ENCODE measurements at regions of chr3 and their contacts with region 1.

Region 1: GRCh38 chr3:55485211-55485791 is 1.8 kb downstream of the WNT5A start:
- DNase-seq: peak; percentile 55 to 70
- H3K4me3 ChIP-seq: peak overlapping the region; percentile 17
- H3K4me3 Mint-ChIP-seq: peak overlapping the region; percentile 90
- H3K27ac Mint-ChIP-seq: no peak overlapping the region
- H3K4me1 ChIP-seq: peaks cover 7% of the 10 kb centered on the region; the same call in 1 of the 2 replicates
- H3K4me1 Mint-ChIP-seq: no peaks in the 10 kb centered on the region
- H3K27me3 ChIP-seq: no peaks in the 10 kb centered on the region
- H3K27me3 Mint-ChIP-seq: peaks cover 10% of the 10 kb centered on the region
- CTCF ChIP-seq: peak; percentile 71 to 72

Region 2: GRCh38 chr3:55567615-55568014 is 82.3 kb after region 1 on chr3:
- CTCF ChIA-PET with region 1: no interaction called
- POLR2A ChIA-PET with region 1: no interaction called
- intact Hi-C with region 1: loop called (anchors 5 kb)
- DNase-seq: no peak
- H3K4me3 ChIP-seq: no peak overlapping the region
- H3K4me3 Mint-ChIP-seq: no peak overlapping the region
- H3K27ac Mint-ChIP-seq: peak overlapping the region; percentile 3
- H3K4me1 ChIP-seq: peaks cover 32% of the 10 kb centered on the region
- H3K4me1 Mint-ChIP-seq: peaks cover 10% of the 10 kb centered on the region
- H3K27me3 ChIP-seq: no peaks in the 10 kb centered on the region
- H3K27me3 Mint-ChIP-seq: no peaks in the 10 kb centered on the region
- CTCF ChIP-seq: no peak

Region 3: GRCh38 chr3:55658690-55659562 is 173.6 kb after region 1 on chr3:
- CTCF ChIA-PET with region 1: no interaction called
- POLR2A ChIA-PET with region 1: no interaction called
- intact Hi-C with region 1: no loop called
- DNase-seq: no peak
- H3K4me3 ChIP-seq: no peak overlapping the region
- H3K4me3 Mint-ChIP-seq: no peak overlapping the region
- H3K27ac Mint-ChIP-seq: no peak overlapping the region
- H3K4me1 ChIP-seq: no peaks in the 10 kb centered on the region
- H3K4me1 Mint-ChIP-seq: peaks cover 6% of the 10 kb centered on the region
- H3K27me3 ChIP-seq: no peaks in the 10 kb centered on the region
- H3K27me3 Mint-ChIP-seq: peaks cover 7% of the 10 kb centered on the region
- CTCF ChIP-seq: no peak

Region 4: DNA sequence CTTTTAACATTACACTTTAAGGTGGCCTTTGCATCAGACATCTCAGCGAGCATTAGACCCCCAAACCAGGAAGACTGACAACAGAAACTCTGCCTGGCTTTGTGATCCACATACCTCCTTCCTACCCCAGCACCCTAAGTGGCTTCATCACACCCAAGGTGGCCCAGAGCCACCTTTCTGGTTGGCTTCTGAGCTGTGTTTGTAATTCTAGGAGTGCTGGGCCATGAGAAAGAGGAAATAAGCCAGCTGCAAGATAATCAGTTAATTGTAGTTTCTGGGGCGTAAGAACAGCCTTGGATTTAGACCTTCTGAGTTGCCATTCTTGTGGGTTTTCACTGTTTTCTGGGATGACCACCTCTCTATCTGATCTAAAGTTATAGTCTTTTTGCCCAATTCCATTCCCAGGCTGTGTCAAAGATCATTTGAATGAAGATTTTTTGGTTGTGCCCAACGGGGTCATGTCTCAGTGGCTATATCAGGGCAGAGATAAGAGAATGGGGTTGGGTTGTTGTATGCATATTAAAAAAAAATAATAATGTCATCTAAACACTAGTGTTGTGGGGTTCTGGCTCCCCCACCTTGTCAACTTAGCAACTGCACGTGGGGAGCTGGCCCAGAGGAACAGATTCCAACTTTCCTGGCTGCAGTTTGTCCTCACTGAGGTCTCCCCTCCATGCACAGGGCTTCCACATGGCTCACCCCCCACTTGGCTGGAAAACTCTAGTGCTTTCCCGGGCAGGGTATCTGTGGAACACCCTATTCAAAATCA is 236.6 kb after region 1 on chr3:
- CTCF ChIA-PET with region 1: interaction called, 8 read pairs
- POLR2A ChIA-PET with region 1: no interaction called
- intact Hi-C with region 1: loop called (anchors 1 kb)
- DNase-seq: peak in 1 of 2 experiments; percentile 31
- H3K4me3 ChIP-seq: no peak overlapping the region
- H3K4me3 Mint-ChIP-seq: no peak overlapping the region
- H3K27ac Mint-ChIP-seq: no peak overlapping the region
- H3K4me1 ChIP-seq: no peaks in the 10 kb centered on the region
- H3K4me1 Mint-ChIP-seq: no peaks in the 10 kb centered on the region
- H3K27me3 ChIP-seq: 0 out of 2 replicates have a peak, but pooled peaks cover 1% of the 10 kb centered on the region
- H3K27me3 Mint-ChIP-seq: peaks cover 9% of the 10 kb centered on the region
- CTCF ChIP-seq: peak; percentile 51 to 64

Region 5: DNA sequence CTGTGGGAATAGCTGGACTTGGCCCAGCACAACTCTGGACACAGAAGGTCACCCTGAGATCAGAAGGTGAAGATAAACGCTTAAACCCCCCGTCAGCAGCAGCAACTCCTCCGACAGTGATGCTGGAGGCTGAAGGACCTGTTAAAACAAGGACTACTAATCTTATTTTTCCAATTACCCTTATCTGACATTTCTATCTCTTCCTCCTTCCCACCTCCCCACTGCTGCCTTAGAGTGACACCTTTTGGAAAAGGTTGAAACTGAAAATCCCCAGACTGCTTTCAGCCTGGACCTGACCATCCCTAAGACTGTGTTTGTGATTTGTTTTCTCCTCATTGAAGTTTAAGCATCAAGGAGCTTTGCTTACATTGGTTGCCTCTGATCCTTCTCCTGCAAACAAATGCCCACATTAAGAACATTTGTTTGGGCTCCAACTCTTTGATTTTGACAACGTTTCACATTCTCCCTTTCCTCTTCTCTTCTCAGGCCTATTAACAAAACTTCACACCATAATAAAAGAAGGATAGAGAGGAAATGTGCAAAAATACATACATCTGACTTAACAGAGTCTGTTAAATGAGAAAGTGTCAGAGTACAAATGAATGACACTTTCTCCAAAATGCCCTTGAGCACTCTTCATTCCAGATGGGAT is 412.4 kb after region 1 on chr3:
- CTCF ChIA-PET with region 1: no interaction called
- POLR2A ChIA-PET with region 1: no interaction called
- intact Hi-C with region 1: loop called (anchors 5 kb)
- DNase-seq: peak in 1 of 2 experiments; percentile 32
- H3K4me3 ChIP-seq: no peak overlapping the region
- H3K4me3 Mint-ChIP-seq: no peak overlapping the region
- H3K27ac Mint-ChIP-seq: no peak overlapping the region
- H3K4me1 ChIP-seq: no peaks in the 10 kb centered on the region
- H3K4me1 Mint-ChIP-seq: no peaks in the 10 kb centered on the region
- H3K27me3 ChIP-seq: no peaks in the 10 kb centered on the region
- H3K27me3 Mint-ChIP-seq: peaks cover 3% of the 10 kb centered on the region
- CTCF ChIP-seq: peak; percentile 33 to 40

Measured in Caco-2 (cell line).